GM12878 (cell line): ENCODE measurements at regions of chr10 and their contacts with region 1.

Region 1: GRCh38 chr10:68156373-68157185 is 47.3 kb downstream of the MYPN start:
- DNase-seq: no peak
- ATAC-seq: peak; percentile 89
- H3K4me3 ChIP-seq: no peak overlapping the region
- H3K27ac ChIP-seq: no peak overlapping the region
- H3K4me1 ChIP-seq: no peaks in the 10 kb centered on the region
- H3K27me3 ChIP-seq: no peaks in the 10 kb centered on the region
- CTCF ChIP-seq: peak; percentile 75 to 87 (median 85)
- EP300 ChIP-seq: no peak
- POLR2A ChIP-seq: no peak
- RAD21 ChIP-seq: peak; percentile 91

Region 2: GRCh38 chr10:67788025-67788886 is 368.3 kb before region 1 on chr10:
- CTCF ChIA-PET with region 1: interaction called, 110 read pairs
- POLR2A ChIA-PET with region 1: interaction called, 13 read pairs
- RAD21 ChIA-PET with region 1: interaction called, 64 read pairs
- SMC1A ChIA-PET with region 1: interaction called, 46 read pairs
- in situ Hi-C with region 1: loop called (anchors 5 kb)
- intact Hi-C with region 1: loop called (anchors 1 kb)
- DNase-seq: no peak
- ATAC-seq: peak; percentile 84
- H3K4me3 ChIP-seq: no peak overlapping the region
- H3K27ac ChIP-seq: no peak overlapping the region
- H3K4me1 ChIP-seq: peaks cover 20% of the 10 kb centered on the region
- H3K27me3 ChIP-seq: no peaks in the 10 kb centered on the region
- CTCF ChIP-seq: peak; percentile 73 to 85 (median 83)
- EP300 ChIP-seq: no peak
- POLR2A ChIP-seq: no peak
- RAD21 ChIP-seq: peak; percentile 84

Region 3: GRCh38 chr10:67861750-67862460 is 294.7 kb before region 1 on chr10:
- CTCF ChIA-PET with region 1: interaction called, 195 read pairs
- POLR2A ChIA-PET with region 1: no interaction called
- RAD21 ChIA-PET with region 1: interaction called, 113 read pairs
- SMC1A ChIA-PET with region 1: interaction called, 99 read pairs
- in situ Hi-C with region 1: no loop called
- intact Hi-C with region 1: no loop called
- DNase-seq: no peak
- ATAC-seq: 0 out of 3 replicates have a peak, but pooled peaks have one; percentile 18
- H3K4me3 ChIP-seq: no peak overlapping the region
- H3K27ac ChIP-seq: no peak overlapping the region
- H3K4me1 ChIP-seq: no peaks in the 10 kb centered on the region; the same call in 1 of the 2 replicates
- H3K27me3 ChIP-seq: no peaks in the 10 kb centered on the region
- CTCF ChIP-seq: no peak
- EP300 ChIP-seq: no peak
- POLR2A ChIP-seq: no peak
- RAD21 ChIP-seq: no peak

Region 4: DNA sequence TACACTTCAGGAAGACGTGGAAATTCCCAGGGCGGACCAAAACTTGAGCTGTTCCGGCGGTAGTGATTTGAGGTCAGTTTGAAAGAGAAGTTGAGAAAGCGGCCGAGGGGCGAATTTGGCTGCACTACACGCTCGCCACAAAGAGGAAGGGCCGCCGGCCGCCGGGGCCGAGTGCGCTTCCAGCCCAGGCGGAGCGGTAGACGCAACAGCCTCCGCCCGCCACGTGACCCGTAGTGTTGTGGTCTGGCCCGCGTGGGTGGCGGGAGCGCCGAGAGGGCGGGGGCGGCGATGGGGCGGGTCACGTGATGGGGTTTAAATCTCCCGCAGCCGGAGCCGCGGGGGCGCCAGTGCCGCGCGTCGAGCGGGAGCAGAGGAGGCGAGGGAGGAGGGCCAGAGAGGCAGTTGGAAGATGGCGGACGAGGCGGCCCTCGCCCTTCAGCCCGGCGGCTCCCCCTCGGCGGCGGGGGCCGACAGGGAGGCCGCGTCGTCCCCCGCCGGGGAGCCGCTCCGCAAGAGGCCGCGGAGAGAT is 272.2 kb before region 1 on chr10 and contains the start of gene SIRT1:
- CTCF ChIA-PET with region 1: interaction called, 15 read pairs
- POLR2A ChIA-PET with region 1: interaction called, 6 read pairs
- RAD21 ChIA-PET with region 1: no interaction called
- SMC1A ChIA-PET with region 1: interaction called, 11 read pairs
- in situ Hi-C with region 1: no loop called
- intact Hi-C with region 1: no loop called
- DNase-seq: peak; percentile 71
- ATAC-seq: peak; percentile 90
- H3K4me3 ChIP-seq: peak within 1 kb of the TSS; percentile 93
- H3K27ac ChIP-seq: peak within 1 kb of the TSS; percentile 78
- H3K4me1 ChIP-seq: peaks cover 4% of the 10 kb centered on the region
- H3K27me3 ChIP-seq: no peaks in the 10 kb centered on the region
- CTCF ChIP-seq: peak in 1 of 3 experiments; percentile 15; a peak in 1 of 6 replicates
- EP300 ChIP-seq: peak in 1 of 2 experiments; percentile 48; a peak in 1 of 4 replicates
- POLR2A ChIP-seq: peak; percentile 91
- RAD21 ChIP-seq: no peak
- polyA plus RNA-seq, gene SIRT1: 4.9 to 6.6 TPM

Region 5: DNA sequence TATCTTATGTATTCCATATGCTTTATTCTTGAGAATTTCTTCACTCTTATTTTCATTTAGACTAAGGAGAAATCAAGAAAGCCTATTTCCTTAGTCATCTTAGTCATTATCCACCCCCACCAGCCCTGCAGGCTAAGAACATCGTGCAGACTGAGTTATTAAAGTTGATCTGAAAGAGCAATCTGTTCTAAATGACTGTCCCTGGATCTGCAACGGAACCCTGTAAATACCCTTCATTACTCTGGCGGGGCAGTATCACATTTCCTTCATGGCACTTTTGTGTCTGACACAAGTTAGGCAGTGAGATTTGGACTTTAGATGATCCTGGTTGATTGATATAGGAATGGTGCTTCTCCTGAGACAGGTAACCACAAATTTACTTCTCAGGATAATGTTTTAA is 50.8 kb before region 1 on chr10:
- CTCF ChIA-PET with region 1: interaction called, 18 read pairs
- POLR2A ChIA-PET with region 1: no interaction called
- RAD21 ChIA-PET with region 1: no interaction called
- SMC1A ChIA-PET with region 1: interaction called, 4 read pairs
- in situ Hi-C with region 1: no loop called
- intact Hi-C with region 1: loop called (anchors 1 kb)
- DNase-seq: no peak
- ATAC-seq: peak; percentile 31; the same call in 2 of the 3 replicates
- H3K4me3 ChIP-seq: no peak overlapping the region
- H3K27ac ChIP-seq: no peak overlapping the region
- H3K4me1 ChIP-seq: no peaks in the 10 kb centered on the region
- H3K27me3 ChIP-seq: no peaks in the 10 kb centered on the region
- CTCF ChIP-seq: no peak
- EP300 ChIP-seq: no peak
- POLR2A ChIP-seq: no peak
- RAD21 ChIP-seq: no peak

Region 6: DNA sequence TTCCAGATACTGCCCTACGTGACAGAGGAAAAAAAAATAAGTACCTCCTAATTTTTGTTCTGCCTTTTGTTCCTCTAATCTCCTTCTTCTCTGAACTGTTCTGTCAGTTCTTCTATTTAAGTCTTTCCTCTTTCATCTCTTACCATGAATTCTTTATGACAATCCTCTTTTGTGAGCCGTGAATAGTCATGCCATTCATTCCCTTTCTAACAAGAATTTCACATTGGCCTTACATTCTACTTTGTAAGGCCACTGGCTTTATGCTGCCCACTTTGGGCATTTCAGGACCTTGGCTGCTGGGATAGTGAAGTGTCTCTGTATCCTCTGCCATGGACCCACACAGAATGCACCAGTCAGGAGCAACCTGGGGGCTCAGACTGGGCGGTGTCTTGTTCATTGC is 22.4 kb after region 1 on chr10:
- CTCF ChIA-PET with region 1: interaction called, 5 read pairs
- POLR2A ChIA-PET with region 1: no interaction called
- RAD21 ChIA-PET with region 1: interaction called, 8 read pairs
- SMC1A ChIA-PET with region 1: interaction called, 19 read pairs
- in situ Hi-C with region 1: no loop called
- intact Hi-C with region 1: no loop called
- DNase-seq: no peak
- ATAC-seq: no peak
- H3K4me3 ChIP-seq: no peak overlapping the region
- H3K27ac ChIP-seq: no peak overlapping the region
- H3K4me1 ChIP-seq: no peaks in the 10 kb centered on the region
- H3K27me3 ChIP-seq: no peaks in the 10 kb centered on the region
- CTCF ChIP-seq: no peak
- EP300 ChIP-seq: no peak
- POLR2A ChIP-seq: no peak
- RAD21 ChIP-seq: no peak

Region 7: GRCh38 chr10:68301790-68302502 is 145.4 kb after region 1 on chr10:
- CTCF ChIA-PET with region 1: interaction called, 51 read pairs
- POLR2A ChIA-PET with region 1: no interaction called
- RAD21 ChIA-PET with region 1: interaction called, 14 read pairs
- SMC1A ChIA-PET with region 1: interaction called, 4 read pairs
- in situ Hi-C with region 1: no loop called
- intact Hi-C with region 1: loop called (anchors 2 kb)
- DNase-seq: peak; percentile 41
- ATAC-seq: peak; percentile 84
- H3K4me3 ChIP-seq: no peak overlapping the region
- H3K27ac ChIP-seq: no peak overlapping the region
- H3K4me1 ChIP-seq: peaks cover 16% of the 10 kb centered on the region
- H3K27me3 ChIP-seq: no peaks in the 10 kb centered on the region
- CTCF ChIP-seq: peak; percentile 52 to 64 (median 56); a peak in 5 of 6 replicates
- EP300 ChIP-seq: no peak
- POLR2A ChIP-seq: no peak
- RAD21 ChIP-seq: peak; percentile 70